Calu3 (cell line): ENCODE measurements at regions of chr3 and their contacts with region 1.

Region 1: DNA sequence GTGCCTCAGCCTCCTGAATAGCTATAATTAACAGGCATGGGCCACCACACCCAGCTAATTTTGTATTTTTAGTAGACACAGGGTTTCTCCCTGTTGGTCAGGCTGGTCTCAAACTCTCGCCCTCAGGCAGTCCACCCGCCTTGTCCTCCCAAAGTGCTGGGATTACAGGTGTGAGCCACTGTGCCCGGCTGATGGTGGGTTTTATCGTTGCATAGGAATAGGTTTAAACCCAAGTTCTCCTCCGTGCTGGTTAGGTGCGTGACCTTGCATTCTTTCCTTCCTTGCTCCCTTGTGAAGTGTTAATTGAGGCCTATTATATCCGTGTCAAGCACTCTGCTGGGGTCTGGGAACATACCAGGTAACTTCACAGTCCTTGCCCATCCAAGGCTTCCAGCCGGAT is 19.2 kb upstream of the ETV5 start:
- DNase-seq: no peak
- H3K4me3 Mint-ChIP-seq: no peak overlapping the region
- H3K27ac Mint-ChIP-seq: no peak overlapping the region
- H3K4me1 Mint-ChIP-seq: peaks cover 17% of the 10 kb centered on the region
- H3K27me3 Mint-ChIP-seq: no peaks in the 10 kb centered on the region
- CTCF ChIP-seq: no peak

Region 2: GRCh38 chr3:186413615-186414415 is 285.7 kb after region 1 on chr3:
- CTCF ChIA-PET with region 1: no interaction called
- intact Hi-C with region 1: no loop called
- DNase-seq: peak; percentile 59
- H3K4me3 Mint-ChIP-seq: peak overlapping the region; percentile 57
- H3K27ac Mint-ChIP-seq: no peak overlapping the region
- H3K4me1 Mint-ChIP-seq: peaks cover 30% of the 10 kb centered on the region
- H3K27me3 Mint-ChIP-seq: peaks cover 85% of the 10 kb centered on the region
- CTCF ChIP-seq: no peak

Region 3: GRCh38 chr3:187281191-187281714 is 1153.1 kb after region 1 on chr3:
- CTCF ChIA-PET with region 1: no interaction called
- intact Hi-C with region 1: loop called (anchors 5 kb)
- DNase-seq: no peak
- H3K4me3 Mint-ChIP-seq: no peak overlapping the region
- H3K27ac Mint-ChIP-seq: no peak overlapping the region
- H3K4me1 Mint-ChIP-seq: peaks cover 11% of the 10 kb centered on the region
- H3K27me3 Mint-ChIP-seq: peaks cover 28% of the 10 kb centered on the region
- CTCF ChIP-seq: no peak